CD8-positive, alpha-beta T cell (primary cell): ENCODE measurements at regions of chr11 and their contacts with region 1.

Region 1: DNA sequence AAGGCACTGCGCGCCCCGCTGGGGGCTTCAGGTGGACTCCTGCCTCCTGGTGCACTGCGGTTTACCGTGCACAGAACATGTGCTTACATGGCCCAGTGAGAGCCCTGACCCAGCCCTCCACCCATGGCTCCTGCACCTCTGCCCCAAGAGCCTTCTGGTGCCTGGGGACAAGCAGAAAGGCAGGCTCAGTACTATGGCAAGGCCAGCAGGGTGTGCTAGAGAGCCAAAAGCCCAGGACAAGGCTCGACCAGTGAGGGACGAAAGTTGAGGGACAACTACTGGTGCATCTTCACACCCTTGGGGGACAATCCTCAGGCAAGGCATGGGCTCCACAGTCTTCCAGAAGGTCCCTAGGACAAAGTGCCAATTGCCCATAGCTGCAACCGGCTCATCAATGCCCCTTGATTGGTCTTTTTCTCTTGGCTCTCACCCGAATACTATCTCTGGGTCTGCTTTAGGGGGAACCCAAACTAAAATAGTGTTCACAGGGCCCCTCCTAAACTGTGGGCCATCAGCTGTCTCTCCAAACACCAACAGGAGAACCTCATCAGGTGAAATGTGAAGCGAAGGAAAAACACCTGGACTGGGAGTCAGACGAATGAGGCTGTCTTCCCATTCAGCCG is 13.5 kb downstream of the PGA5 start:
- DNase-seq: peak; percentile 31 to 70 (median 58)
- ATAC-seq: peak; percentile 91
- H3K4me3 ChIP-seq: no peak overlapping the region
- H3K4me3 Mint-ChIP-seq: no peak overlapping the region
- H3K27ac ChIP-seq: no peak overlapping the region
- H3K27ac Mint-ChIP-seq: no peak overlapping the region
- H3K4me1 ChIP-seq: no peaks in the 10 kb centered on the region
- H3K4me1 Mint-ChIP-seq: no peaks in the 10 kb centered on the region
- H3K27me3 ChIP-seq: no peaks in the 10 kb centered on the region
- H3K27me3 Mint-ChIP-seq: no peaks in the 10 kb centered on the region
- CTCF ChIP-seq: peak; percentile 70

Region 2: DNA sequence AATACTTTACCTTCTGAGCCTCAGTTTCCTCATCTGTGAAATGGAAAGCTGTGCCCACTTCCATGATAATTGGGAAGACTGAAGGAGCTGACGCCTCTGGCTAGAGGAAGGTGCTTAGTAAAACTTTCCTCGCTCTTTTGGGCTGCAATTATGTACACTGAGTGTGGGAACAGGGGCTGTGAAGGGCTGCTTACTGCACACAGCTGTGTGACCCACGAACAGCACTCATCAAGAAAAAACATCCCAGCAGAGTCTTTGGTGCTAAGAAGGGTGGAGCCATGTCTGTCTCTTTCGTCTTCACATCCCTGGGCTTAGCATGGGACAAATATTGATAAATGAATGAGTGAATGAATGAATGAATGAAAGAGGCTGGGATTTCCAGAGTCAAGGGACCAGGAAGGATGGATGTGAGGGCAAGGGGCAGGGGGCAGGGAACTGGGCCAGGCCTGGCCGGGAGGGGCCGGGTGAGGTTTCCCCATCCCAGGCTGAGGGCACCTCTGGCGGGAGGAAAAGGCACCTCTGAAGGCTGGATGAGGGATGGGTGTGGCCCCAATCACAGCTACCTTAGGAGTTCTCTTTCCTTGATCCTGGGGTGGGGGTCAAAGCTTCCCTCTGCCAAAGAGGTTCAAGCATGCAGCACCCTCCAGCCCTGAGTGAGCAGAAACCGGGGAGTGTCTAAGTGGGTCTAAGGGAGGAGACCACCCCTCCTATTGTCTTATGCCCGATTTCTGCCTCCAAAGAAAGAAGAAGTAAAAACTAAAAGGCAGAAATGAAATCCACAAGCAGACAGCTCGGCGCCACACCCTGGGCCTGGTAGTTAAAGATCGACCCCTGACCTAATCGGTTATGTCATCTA is 161.4 kb before region 1 on chr11:
- CTCF ChIA-PET with region 1: no interaction called
- POLR2A ChIA-PET with region 1: no interaction called
- intact Hi-C with region 1: no loop called
- DNase-seq: peak in 1 of 9 experiments; percentile 8
- ATAC-seq: peak; percentile 46
- H3K4me3 ChIP-seq: no peak overlapping the region
- H3K4me3 Mint-ChIP-seq: peak overlapping the region; percentile 69
- H3K27ac ChIP-seq: no peak overlapping the region
- H3K27ac Mint-ChIP-seq: peak overlapping the region; percentile 82
- H3K4me1 ChIP-seq: peaks cover 28% of the 10 kb centered on the region
- H3K4me1 Mint-ChIP-seq: peaks cover 37% of the 10 kb centered on the region
- H3K27me3 ChIP-seq: no peaks in the 10 kb centered on the region
- H3K27me3 Mint-ChIP-seq: no peaks in the 10 kb centered on the region
- CTCF ChIP-seq: no peak

Region 3: DNA sequence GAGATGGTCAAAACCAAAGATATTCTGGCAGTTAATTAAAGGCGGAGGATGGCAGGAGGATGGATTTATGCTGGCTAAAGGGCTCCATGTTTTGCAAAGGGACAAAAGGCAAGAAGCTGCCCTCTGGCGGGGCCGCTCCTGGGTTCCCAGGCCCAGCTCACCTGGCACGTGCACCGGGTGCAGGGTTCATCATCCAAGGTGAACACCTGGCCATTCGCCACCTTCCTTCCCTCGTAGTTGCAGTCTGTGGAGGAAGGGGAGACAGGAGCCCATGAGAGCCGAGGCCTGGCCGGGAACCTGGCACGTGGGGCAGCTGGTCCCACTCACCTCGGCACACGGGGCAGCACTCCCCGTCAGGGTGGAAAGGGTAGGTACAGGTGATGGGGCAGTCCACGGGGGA is 10.3 kb after region 1 on chr11:
- CTCF ChIA-PET with region 1: interaction called, 10 read pairs
- POLR2A ChIA-PET with region 1: no interaction called
- intact Hi-C with region 1: no loop called
- DNase-seq: no peak
- ATAC-seq: no peak
- H3K4me3 ChIP-seq: no peak overlapping the region
- H3K4me3 Mint-ChIP-seq: no peak overlapping the region
- H3K27ac ChIP-seq: no peak overlapping the region
- H3K27ac Mint-ChIP-seq: no peak overlapping the region
- H3K4me1 ChIP-seq: no peaks in the 10 kb centered on the region
- H3K4me1 Mint-ChIP-seq: no peaks in the 10 kb centered on the region
- H3K27me3 ChIP-seq: no peaks in the 10 kb centered on the region
- H3K27me3 Mint-ChIP-seq: no peaks in the 10 kb centered on the region
- CTCF ChIP-seq: no peak

Region 4: GRCh38 chr11:61294717-61295595 is 40.4 kb after region 1 on chr11 and contains the start of gene VWCE:
- CTCF ChIA-PET with region 1: interaction called, 16 read pairs
- POLR2A ChIA-PET with region 1: no interaction called
- intact Hi-C with region 1: loop called in 1 of 2 experiments (anchors 1 kb)
- DNase-seq: peak; percentile 42 to 78 (median 66)
- ATAC-seq: peak; percentile 90
- H3K4me3 ChIP-seq: peak within 1 kb of the TSS; percentile 51 to 76
- H3K4me3 Mint-ChIP-seq: peak within 1 kb of the TSS; percentile 79
- H3K27ac ChIP-seq: no peak within 1 kb of the TSS
- H3K27ac Mint-ChIP-seq: no peak within 1 kb of the TSS
- H3K4me1 ChIP-seq: peaks cover 29% of the 10 kb centered on the region
- H3K4me1 Mint-ChIP-seq: peaks cover 36% of the 10 kb centered on the region
- H3K27me3 ChIP-seq: peaks cover 0 to 15% of the 10 kb centered on the region in 2 experiments
- H3K27me3 Mint-ChIP-seq: peaks cover 16% of the 10 kb centered on the region
- CTCF ChIP-seq: no peak
- total RNA-seq, gene VWCE: 1.4 to 1.5 TPM